Posterior vena cava (tissue), 2 donors: ENCODE measurements at regions of chr15 and their contacts with region 1.

Region 1: DNA sequence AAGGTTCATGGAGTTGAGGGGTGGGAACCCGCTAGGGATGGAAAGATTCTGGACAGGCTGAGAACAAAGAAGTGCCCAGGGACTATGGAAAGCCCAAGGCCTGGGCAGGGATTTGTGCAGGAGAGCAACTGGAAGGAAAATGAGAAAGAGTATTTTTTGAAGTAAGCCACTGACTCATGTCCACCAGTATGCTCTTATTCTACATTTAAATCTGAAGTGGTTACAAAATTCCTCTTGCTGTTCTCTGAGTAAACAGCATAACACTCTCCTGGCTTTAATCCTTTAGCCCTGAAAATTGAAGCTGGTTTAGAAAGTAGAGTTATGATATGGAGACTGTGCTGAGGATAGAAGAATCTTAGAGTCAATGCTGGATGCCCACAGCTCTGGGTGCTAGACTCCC is 165.2 kb downstream of the ISL2 start:
- DNase-seq: no peak

Region 2: DNA sequence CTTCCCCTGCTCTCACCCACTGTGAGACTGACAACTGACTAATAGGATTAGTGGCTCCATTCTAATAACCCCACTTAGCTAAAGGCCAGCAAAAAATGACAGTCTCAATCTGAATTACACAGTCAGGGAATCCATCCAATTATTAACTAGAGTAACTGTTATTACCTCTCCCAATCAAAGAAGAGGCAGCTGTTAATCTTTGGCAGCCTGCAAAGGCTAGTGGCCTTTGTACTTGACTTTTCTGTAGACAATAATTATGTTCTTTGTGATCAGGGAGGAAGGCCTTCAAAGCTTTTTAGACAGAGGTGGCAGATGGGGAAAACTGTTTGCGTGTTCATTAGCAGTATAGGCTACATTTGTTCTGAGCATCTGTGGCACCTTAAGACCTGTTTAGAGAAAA is 12.6 kb after region 1 on chr15:
- intact Hi-C with region 1: loop called in 1 of 2 experiments (anchors 2 kb)
- DNase-seq: no peak

Region 3: DNA sequence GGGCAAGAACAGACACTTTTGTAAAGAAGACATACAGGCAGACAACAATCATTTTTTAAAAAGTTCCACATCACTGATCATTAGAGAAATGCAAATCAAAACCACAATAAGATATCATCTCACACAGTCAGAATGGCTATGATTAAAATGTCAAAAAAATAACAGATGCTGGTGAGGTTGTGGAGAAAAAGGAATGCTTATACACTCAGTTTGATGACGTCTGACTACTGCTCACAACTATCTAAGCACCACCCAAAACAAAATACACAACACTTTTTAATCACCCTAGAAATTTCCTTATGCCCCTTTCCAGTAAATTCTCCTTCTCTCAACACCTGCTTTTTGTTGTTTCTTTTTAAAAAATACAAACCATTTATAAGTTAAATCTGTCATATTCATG is 63.6 kb after region 1 on chr15:
- intact Hi-C with region 1: no loop called
- DNase-seq: no peak

Region 4: GRCh38 chr15:76730262-76730661 is 228.5 kb after region 1 on chr15:
- intact Hi-C with region 1: no loop called
- DNase-seq: no peak